MCF 10A (cell line): ENCODE measurements at regions of chr1 and their contacts with region 1.

Region 1: GRCh38 chr1:92831762-92832536 is at the start of gene RPL5:
- DNase-seq: peak; percentile 98
- H3K4me3 Mint-ChIP-seq: peak within 1 kb of the TSS; percentile 95
- H3K27ac Mint-ChIP-seq: peak within 1 kb of the TSS; percentile 100
- H3K4me1 Mint-ChIP-seq: peaks cover 28% of the 10 kb centered on the region
- H3K27me3 Mint-ChIP-seq: no peaks in the 10 kb centered on the region
- CTCF ChIP-seq: peak; percentile 78
- total RNA-seq, gene RPL5: 1,285 and 1,607 TPM in 2 replicates

Region 2: DNA sequence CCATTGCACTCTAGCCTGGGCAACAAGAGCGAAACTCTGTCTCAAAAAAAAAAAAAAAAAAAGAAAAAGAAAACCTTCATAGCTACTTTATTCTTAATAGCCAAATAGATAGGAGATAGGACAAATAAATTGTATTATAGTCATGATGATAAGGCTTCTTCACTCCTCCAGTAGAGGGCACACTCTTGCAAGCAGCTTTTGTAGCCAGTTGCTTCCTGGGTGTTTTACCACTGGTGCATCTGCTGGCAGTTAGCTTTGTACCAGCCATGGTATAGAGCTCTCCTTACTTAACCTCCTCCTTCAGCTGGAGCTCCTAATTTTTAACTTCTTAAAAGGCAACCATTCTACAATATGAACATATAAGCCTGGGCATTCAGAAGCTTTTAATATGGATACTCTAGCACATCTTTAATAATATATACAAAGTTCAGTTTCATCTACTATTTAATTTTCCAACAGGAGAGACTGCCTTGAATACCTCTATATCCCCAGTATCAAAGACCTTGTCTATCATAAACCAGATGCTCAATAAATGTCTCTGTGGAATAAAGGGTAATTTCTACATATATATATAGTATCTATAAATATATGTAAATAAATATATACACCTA is 82.8 kb before region 1 on chr1:
- CTCF ChIA-PET with region 1: interaction called, 9 read pairs
- POLR2A ChIA-PET with region 1: interaction called, 10 read pairs
- intact Hi-C with region 1: no loop called
- DNase-seq: peak; percentile 74
- H3K4me3 Mint-ChIP-seq: no peak overlapping the region
- H3K27ac Mint-ChIP-seq: no peak overlapping the region
- H3K4me1 Mint-ChIP-seq: peaks cover 19% of the 10 kb centered on the region
- H3K27me3 Mint-ChIP-seq: no peaks in the 10 kb centered on the region
- CTCF ChIP-seq: peak; percentile 60

Region 3: GRCh38 chr1:92792340-92792782 is 39.6 kb before region 1 on chr1:
- CTCF ChIA-PET with region 1: interaction called, 4 read pairs
- POLR2A ChIA-PET with region 1: interaction called, 45 read pairs
- intact Hi-C with region 1: no loop called
- DNase-seq: peak; percentile 23
- H3K4me3 Mint-ChIP-seq: no peak overlapping the region
- H3K27ac Mint-ChIP-seq: no peak overlapping the region
- H3K4me1 Mint-ChIP-seq: no peaks in the 10 kb centered on the region
- H3K27me3 Mint-ChIP-seq: no peaks in the 10 kb centered on the region
- CTCF ChIP-seq: no peak

Region 4: DNA sequence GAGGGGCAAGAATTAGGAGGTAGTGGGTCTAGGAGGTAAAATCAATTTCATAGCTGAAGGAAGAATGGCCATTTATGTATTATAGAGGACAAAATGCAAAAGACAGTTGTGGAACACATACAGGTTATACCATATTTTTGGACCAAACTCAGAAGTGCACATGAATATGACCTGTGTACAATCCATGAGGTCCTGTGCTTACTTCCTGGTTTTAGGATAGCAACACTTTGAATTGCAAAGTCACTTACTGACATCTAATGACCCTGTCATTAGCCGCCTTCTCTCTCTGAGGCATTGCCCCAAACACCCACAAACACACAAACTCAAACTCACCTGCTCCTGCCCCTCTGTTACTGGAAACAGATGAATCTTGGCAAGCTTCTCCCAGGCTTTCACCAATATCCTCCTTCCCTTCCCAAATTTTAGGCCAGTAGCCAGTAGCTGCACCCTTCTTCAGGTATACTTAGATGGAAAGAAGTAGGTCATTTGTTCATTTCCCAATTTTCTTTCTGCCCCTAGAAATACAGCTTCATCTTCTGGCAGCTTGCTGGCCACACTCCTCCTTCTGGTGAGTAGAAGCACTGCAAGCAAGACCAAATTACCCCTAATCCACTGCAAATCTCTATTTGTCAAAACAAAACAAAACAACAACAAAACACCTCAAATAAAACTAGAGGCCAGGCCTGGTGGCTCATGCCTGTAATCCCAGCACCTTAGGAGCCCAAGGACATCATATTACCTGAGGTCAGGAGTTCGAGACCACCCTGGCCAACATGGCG is 13.8 kb before region 1 on chr1:
- CTCF ChIA-PET with region 1: interaction called, 22 read pairs
- POLR2A ChIA-PET with region 1: interaction called, 28 read pairs
- intact Hi-C with region 1: no loop called
- DNase-seq: peak; percentile 39
- H3K4me3 Mint-ChIP-seq: no peak overlapping the region
- H3K27ac Mint-ChIP-seq: no peak overlapping the region
- H3K4me1 Mint-ChIP-seq: peaks cover 4% of the 10 kb centered on the region
- H3K27me3 Mint-ChIP-seq: no peaks in the 10 kb centered on the region
- CTCF ChIP-seq: peak; percentile 71

Region 5: GRCh38 chr1:92851729-92852128 is 19.8 kb after region 1 on chr1:
- CTCF ChIA-PET with region 1: interaction called, 4 read pairs
- POLR2A ChIA-PET with region 1: interaction called, 12 read pairs
- intact Hi-C with region 1: no loop called
- DNase-seq: no peak
- H3K4me3 Mint-ChIP-seq: no peak overlapping the region
- H3K27ac Mint-ChIP-seq: no peak overlapping the region
- H3K4me1 Mint-ChIP-seq: peaks cover 6% of the 10 kb centered on the region
- H3K27me3 Mint-ChIP-seq: no peaks in the 10 kb centered on the region
- CTCF ChIP-seq: no peak